Endothelial cell of umbilical vein (primary cell): ENCODE measurements at regions of chr16 and their contacts with region 1.

Region 1: GRCh38 chr16:12803203-12804097 is at the start of gene CPPED1:
- DNase-seq: peak; percentile 91
- H3K4me3 ChIP-seq: peak within 1 kb of the TSS; percentile 35 to 89 (median 76)
- H3K27ac ChIP-seq: peak within 1 kb of the TSS; percentile 99
- H3K4me1 ChIP-seq: peaks cover 26% of the 10 kb centered on the region
- H3K27me3 ChIP-seq: no peaks in the 10 kb centered on the region
- CTCF ChIP-seq: no peak
- POLR2A ChIP-seq: peak; percentile 55
- total RNA-seq, gene CPPED1: 55.8 and 59.3 TPM in 2 replicates

Region 2: DNA sequence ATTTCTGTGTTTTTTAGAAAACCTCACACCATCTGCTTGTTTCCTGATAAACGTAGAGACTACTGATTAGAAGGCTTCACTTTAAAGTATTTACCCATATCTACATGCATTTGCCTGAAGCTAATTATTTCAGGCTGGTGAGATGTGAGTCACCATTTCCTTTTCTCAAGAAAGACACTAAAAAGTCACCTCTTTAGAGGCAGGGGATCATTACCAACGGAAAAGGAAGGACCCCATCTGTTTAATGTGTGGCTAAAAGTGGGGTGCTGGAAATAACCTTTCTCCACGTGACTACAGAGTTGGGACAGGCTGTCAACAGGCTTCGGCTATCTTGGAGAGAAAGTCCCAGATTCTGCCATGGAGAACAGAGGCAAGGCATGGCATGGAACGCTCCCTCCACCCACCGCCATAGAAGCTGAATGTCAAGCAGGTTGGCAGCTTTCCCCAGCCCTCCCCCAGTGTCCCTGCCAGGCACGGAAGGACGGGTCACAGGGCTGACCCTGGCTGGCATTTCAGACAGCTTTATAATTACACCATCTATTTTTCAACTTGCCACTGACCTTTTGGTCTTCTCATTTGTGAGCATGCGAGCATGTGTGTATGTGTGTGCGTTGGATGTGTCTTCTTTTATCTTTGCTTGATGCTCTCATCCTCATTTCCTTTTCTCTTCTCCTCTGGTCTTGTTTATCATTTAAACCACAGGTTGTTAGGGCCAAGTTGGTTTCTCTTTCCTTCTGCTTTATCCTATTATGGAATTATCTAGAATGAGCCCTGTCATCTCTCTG is 156.8 kb before region 1 on chr16:
- CTCF ChIA-PET with region 1: interaction called, 4 read pairs
- POLR2A ChIA-PET with region 1: no interaction called
- dilution Hi-C with region 1: no loop called
- intact Hi-C with region 1: loop called (anchors 1 kb)
- DNase-seq: peak; percentile 94
- H3K4me3 ChIP-seq: no peak overlapping the region
- H3K27ac ChIP-seq: peak overlapping the region; percentile 67
- H3K4me1 ChIP-seq: peaks cover 29% of the 10 kb centered on the region
- H3K27me3 ChIP-seq: no peaks in the 10 kb centered on the region
- CTCF ChIP-seq: no peak
- POLR2A ChIP-seq: no peak

Region 3: GRCh38 chr16:12675852-12676251 is 127.6 kb before region 1 on chr16:
- CTCF ChIA-PET with region 1: no interaction called
- POLR2A ChIA-PET with region 1: no interaction called
- dilution Hi-C with region 1: no loop called
- intact Hi-C with region 1: loop called (anchors 1 kb)
- DNase-seq: peak; percentile 91
- H3K4me3 ChIP-seq: no peak overlapping the region
- H3K27ac ChIP-seq: peak overlapping the region; percentile 51
- H3K4me1 ChIP-seq: peaks cover 33% of the 10 kb centered on the region
- H3K27me3 ChIP-seq: no peaks in the 10 kb centered on the region
- CTCF ChIP-seq: no peak
- POLR2A ChIP-seq: peak; percentile 58

Region 4: DNA sequence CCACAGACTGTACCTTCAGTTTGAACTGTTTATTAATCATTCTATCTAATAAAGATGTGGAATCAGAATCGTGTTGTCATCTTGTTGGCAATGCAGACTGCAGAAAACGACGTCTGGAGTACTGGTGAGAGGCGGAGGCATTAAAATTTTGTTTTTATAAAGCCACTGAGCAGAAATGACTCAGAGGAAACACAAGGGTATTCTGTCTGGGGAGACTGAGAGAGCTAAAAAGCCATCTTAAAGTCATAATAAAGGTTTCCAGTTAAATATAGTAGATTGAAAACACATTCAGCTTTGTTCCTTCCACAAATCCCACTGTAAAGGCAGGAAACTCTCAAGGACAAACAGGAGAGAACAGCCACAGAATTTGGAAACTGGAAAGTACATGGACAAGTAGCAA is 74.0 kb before region 1 on chr16:
- CTCF ChIA-PET with region 1: interaction called, 6 read pairs
- POLR2A ChIA-PET with region 1: interaction called, 7 read pairs
- dilution Hi-C with region 1: no loop called
- intact Hi-C with region 1: loop called (anchors 1 kb)
- DNase-seq: peak; percentile 94
- H3K4me3 ChIP-seq: no peak overlapping the region
- H3K27ac ChIP-seq: peak overlapping the region; percentile 96
- H3K4me1 ChIP-seq: peaks cover 21% of the 10 kb centered on the region
- H3K27me3 ChIP-seq: no peaks in the 10 kb centered on the region
- CTCF ChIP-seq: no peak
- POLR2A ChIP-seq: no peak

Region 5: GRCh38 chr16:12771341-12771798 is 32.1 kb before region 1 on chr16:
- CTCF ChIA-PET with region 1: no interaction called
- POLR2A ChIA-PET with region 1: no interaction called
- dilution Hi-C with region 1: no loop called
- intact Hi-C with region 1: loop called (anchors 2 kb)
- DNase-seq: peak; percentile 68
- H3K4me3 ChIP-seq: no peak overlapping the region
- H3K27ac ChIP-seq: no peak overlapping the region
- H3K4me1 ChIP-seq: peaks cover 6% of the 10 kb centered on the region
- H3K27me3 ChIP-seq: no peaks in the 10 kb centered on the region
- CTCF ChIP-seq: no peak
- POLR2A ChIP-seq: no peak

Region 6: GRCh38 chr16:12958366-12958765 is 154.9 kb after region 1 on chr16:
- CTCF ChIA-PET with region 1: no interaction called
- POLR2A ChIA-PET with region 1: no interaction called
- dilution Hi-C with region 1: no loop called
- intact Hi-C with region 1: no loop called
- DNase-seq: no peak
- H3K4me3 ChIP-seq: no peak overlapping the region
- H3K27ac ChIP-seq: no peak overlapping the region
- H3K4me1 ChIP-seq: no peaks in the 10 kb centered on the region
- H3K27me3 ChIP-seq: no peaks in the 10 kb centered on the region
- CTCF ChIP-seq: no peak
- POLR2A ChIP-seq: no peak